Activated CD4-positive, alpha-beta T cell treated with anti-CD3 and anti-CD28 coated beads for 36 hours (primary cell): ENCODE measurements at regions of chr22 and their contacts with region 1.

Region 1: DNA sequence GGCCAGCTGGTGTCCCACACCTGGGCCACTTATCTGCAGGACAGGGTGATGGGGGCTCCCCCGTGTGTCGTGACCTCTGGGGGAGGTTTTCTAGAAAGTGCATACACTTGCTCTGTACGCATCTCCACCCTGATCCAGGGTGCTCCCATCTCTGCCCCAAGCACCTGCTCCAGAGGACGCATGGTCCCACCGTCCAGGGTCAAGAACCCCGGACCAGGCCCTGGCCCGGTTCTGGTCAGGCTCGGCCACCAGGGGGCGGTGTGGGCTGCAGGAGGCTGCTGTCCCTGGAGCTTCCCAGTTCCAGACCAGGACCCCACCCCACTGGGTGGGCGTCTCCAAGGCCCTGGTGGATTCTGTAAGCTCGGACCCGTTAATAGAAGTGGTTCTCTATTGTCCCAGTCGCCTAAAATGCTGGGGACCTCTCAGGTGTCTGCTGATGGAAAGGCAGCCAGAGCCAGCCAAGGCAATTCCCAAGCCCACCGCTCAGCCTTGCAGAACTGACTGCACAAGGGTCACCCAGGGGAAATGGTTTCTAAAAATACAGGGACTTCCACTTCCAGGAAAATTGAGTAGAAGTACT is 34.7 kb upstream of the SEPTIN5 start:
- DNase-seq: peak; percentile 67
- ATAC-seq: peak; percentile 49
- H3K4me3 Mint-ChIP-seq: no peak overlapping the region
- H3K27ac Mint-ChIP-seq: no peak overlapping the region
- H3K4me1 Mint-ChIP-seq: peaks cover 6% of the 10 kb centered on the region
- H3K27me3 Mint-ChIP-seq: peaks cover 19% of the 10 kb centered on the region

Region 2: DNA sequence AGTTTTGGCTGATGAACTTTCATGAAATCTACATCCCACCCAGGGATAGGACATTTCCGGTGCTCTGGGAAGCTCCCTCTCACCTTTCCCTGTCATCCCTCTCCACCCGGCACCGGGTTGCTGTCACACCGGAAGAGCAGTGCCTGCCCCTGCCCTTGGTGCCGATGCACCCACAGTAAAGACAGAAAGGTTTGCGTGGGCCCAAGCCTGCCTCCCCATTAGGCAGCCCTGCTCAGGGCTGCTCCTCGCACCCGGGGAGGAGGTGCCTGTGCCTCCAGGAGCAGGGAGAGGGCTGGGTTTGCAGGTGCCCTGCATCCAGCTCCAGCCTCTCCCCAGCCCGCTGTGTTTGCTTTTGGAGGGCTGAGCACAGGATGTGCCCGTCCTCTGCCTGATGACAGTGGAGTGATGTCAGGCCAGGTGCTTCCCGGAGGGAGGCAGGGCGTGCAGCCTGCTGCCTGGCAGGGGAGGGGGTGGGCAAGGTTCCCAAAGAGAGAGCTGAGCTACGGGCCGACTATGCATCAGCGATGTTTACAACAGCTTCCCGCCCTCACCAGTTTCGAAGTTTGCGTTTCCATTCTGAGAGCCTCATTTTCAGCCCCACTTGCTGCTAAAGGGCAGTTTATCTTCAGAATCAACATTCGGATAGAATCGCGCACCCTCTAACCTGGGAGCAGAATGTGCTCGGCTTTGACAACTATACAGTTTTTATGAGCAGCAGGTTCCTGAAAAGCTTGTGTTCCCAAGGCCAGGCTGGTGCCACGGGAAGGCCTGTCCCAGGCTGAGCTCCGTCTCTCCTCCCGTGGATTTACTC is 72.2 kb before region 1 on chr22:
- CTCF ChIA-PET with region 1: no interaction called
- POLR2A ChIA-PET with region 1: no interaction called
- intact Hi-C with region 1: no loop called
- DNase-seq: peak; percentile 85
- ATAC-seq: peak; percentile 80
- H3K4me3 Mint-ChIP-seq: peak overlapping the region; percentile 50
- H3K27ac Mint-ChIP-seq: peak overlapping the region; percentile 82
- H3K4me1 Mint-ChIP-seq: peaks cover 64% of the 10 kb centered on the region
- H3K27me3 Mint-ChIP-seq: no peaks in the 10 kb centered on the region

Region 3: GRCh38 chr22:19663286-19663815 is 16.3 kb before region 1 on chr22:
- CTCF ChIA-PET with region 1: interaction called, 14 read pairs
- POLR2A ChIA-PET with region 1: no interaction called
- intact Hi-C with region 1: no loop called
- DNase-seq: peak; percentile 31
- ATAC-seq: peak; percentile 55
- H3K4me3 Mint-ChIP-seq: no peak overlapping the region
- H3K27ac Mint-ChIP-seq: no peak overlapping the region
- H3K4me1 Mint-ChIP-seq: no peaks in the 10 kb centered on the region
- H3K27me3 Mint-ChIP-seq: no peaks in the 10 kb centered on the region

Region 4: GRCh38 chr22:19717691-19718455 is 38.3 kb after region 1 on chr22:
- CTCF ChIA-PET with region 1: interaction called, 4 read pairs
- POLR2A ChIA-PET with region 1: interaction called, 3 read pairs
- intact Hi-C with region 1: loop called (anchors 1 to 5 kb)
- DNase-seq: peak; percentile 87
- ATAC-seq: peak; percentile 92
- H3K4me3 Mint-ChIP-seq: peak overlapping the region; percentile 63
- H3K27ac Mint-ChIP-seq: no peak overlapping the region
- H3K4me1 Mint-ChIP-seq: peaks cover 11% of the 10 kb centered on the region
- H3K27me3 Mint-ChIP-seq: peaks cover 29% of the 10 kb centered on the region